ENCODE measurements at regions of chr1 and their contacts with region 1.

Region 1: DNA sequence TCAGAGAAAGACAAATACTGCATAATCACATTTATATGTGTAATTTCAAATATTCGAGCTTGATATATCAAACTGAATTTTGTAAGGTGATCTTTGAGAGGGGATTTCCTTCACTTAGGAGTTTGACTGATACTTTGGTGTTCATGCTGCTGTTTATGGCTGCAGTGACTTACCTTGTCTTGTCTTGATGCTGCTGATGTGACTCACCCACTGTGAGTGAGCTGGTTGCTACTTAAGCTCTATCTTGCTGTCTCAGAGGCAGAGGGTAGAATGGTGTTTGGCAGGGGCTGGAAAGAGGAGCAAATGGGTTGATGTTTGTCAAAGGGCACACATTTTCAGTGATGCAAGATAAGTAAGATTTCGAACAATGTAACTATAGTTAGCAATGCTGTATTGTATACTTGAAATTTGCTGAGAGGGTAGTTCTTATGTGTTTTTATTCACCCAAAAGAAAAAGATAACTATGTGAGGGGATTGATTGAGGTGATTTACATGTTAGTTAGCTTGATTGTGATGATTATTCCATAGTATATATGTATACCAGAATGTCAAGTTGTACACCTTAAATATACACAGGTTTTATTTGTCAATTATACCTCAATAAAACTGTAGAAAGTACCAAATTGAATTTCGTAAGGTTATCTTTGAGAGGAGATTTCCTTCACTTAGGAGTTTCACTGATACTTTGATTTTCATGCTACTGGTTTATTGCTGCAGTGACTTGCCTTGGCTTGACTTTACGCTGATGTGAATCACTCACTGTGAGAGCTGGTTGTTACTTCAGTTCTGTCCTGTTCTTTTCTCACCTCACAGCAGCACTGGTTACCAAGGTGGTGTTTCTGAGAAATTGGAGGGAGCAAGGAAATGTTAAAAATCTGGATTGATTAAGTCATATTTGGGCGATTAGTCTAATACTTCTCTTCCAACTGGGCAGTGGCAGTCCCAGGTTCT is 94.5 kb upstream of the SLC5A9 start:
- DNase-seq: peak; percentile 21
- H3K4me3 Mint-ChIP-seq: no peak overlapping the region
- H3K27ac Mint-ChIP-seq: peak overlapping the region; percentile 70
- H3K4me1 Mint-ChIP-seq: peaks cover 17% of the 10 kb centered on the region
- H3K27me3 Mint-ChIP-seq: no peaks in the 10 kb centered on the region
- CTCF ChIP-seq: no peak

Region 2: DNA sequence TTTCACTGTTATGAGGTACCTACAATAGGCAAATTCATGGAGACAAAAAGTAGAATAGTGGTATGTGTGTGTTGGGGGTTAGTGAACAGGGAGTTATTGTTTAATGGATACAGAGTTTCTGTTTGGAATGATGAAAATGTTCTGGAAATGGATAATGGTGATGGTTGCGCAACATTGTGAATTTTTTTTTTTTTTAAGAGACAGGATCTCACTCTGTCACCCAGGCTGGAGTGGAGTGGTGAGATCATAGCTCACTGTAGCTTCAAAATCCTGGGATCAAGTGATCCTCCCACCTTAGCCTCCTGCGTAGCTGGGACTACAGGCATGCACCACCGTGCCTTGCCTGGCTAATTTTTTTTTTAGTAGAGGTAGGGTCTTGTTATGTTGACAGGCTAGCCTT is 96.3 kb before region 1 on chr1:
- CTCF ChIA-PET with region 1: no interaction called
- POLR2A ChIA-PET with region 1: no interaction called
- intact Hi-C with region 1: no loop called
- DNase-seq: peak; percentile 23
- H3K4me3 Mint-ChIP-seq: no peak overlapping the region
- H3K27ac Mint-ChIP-seq: no peak overlapping the region
- H3K4me1 Mint-ChIP-seq: peaks cover 21% of the 10 kb centered on the region
- H3K27me3 Mint-ChIP-seq: no peaks in the 10 kb centered on the region
- CTCF ChIP-seq: no peak

Region 3: GRCh38 chr1:48114596-48115382 is 13.2 kb before region 1 on chr1:
- CTCF ChIA-PET with region 1: interaction called, 24 read pairs
- POLR2A ChIA-PET with region 1: interaction called, 13 read pairs
- intact Hi-C with region 1: no loop called
- DNase-seq: peak; percentile 82
- H3K4me3 Mint-ChIP-seq: no peak overlapping the region
- H3K27ac Mint-ChIP-seq: peak overlapping the region; percentile 93
- H3K4me1 Mint-ChIP-seq: peaks cover 45% of the 10 kb centered on the region
- H3K27me3 Mint-ChIP-seq: no peaks in the 10 kb centered on the region
- CTCF ChIP-seq: no peak

Region 4: GRCh38 chr1:48139275-48139674 is 11.3 kb after region 1 on chr1:
- CTCF ChIA-PET with region 1: no interaction called
- POLR2A ChIA-PET with region 1: interaction called, 15 read pairs
- intact Hi-C with region 1: no loop called
- DNase-seq: no peak
- H3K4me3 Mint-ChIP-seq: no peak overlapping the region
- H3K27ac Mint-ChIP-seq: no peak overlapping the region
- H3K4me1 Mint-ChIP-seq: peaks cover 6% of the 10 kb centered on the region
- H3K27me3 Mint-ChIP-seq: no peaks in the 10 kb centered on the region
- CTCF ChIP-seq: no peak

Region 5: DNA sequence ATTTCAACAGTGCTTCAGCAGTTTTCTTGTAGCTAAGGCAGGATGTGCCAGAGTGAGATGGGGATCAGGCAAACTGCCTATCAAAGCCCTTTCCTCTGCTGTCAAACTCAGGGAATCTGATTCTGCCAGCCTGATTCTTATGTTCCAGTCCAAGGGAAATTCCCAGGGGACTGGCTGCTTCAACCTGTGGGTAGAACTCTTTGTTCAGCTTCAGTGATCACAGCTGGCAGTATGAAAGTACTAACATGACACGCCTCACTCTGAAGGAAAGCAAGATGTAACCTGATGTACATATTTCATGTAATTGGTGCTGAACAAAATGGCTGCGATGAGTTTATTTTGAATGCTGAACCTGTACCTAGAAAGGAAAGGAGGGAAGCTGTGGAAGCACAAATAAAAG is 54.4 kb after region 1 on chr1:
- CTCF ChIA-PET with region 1: no interaction called
- POLR2A ChIA-PET with region 1: interaction called, 14 read pairs
- intact Hi-C with region 1: no loop called
- DNase-seq: peak; percentile 67
- H3K4me3 Mint-ChIP-seq: peak overlapping the region; percentile 66
- H3K27ac Mint-ChIP-seq: peak overlapping the region; percentile 88
- H3K4me1 Mint-ChIP-seq: peaks cover 48% of the 10 kb centered on the region
- H3K27me3 Mint-ChIP-seq: no peaks in the 10 kb centered on the region
- CTCF ChIP-seq: no peak

Region 6: GRCh38 chr1:48309564-48310082 is 181.6 kb after region 1 on chr1:
- CTCF ChIA-PET with region 1: no interaction called
- POLR2A ChIA-PET with region 1: no interaction called
- intact Hi-C with region 1: no loop called
- DNase-seq: no peak
- H3K4me3 Mint-ChIP-seq: no peak overlapping the region
- H3K27ac Mint-ChIP-seq: no peak overlapping the region
- H3K4me1 Mint-ChIP-seq: no peaks in the 10 kb centered on the region
- H3K27me3 Mint-ChIP-seq: no peaks in the 10 kb centered on the region
- CTCF ChIP-seq: no peak

Region 7: DNA sequence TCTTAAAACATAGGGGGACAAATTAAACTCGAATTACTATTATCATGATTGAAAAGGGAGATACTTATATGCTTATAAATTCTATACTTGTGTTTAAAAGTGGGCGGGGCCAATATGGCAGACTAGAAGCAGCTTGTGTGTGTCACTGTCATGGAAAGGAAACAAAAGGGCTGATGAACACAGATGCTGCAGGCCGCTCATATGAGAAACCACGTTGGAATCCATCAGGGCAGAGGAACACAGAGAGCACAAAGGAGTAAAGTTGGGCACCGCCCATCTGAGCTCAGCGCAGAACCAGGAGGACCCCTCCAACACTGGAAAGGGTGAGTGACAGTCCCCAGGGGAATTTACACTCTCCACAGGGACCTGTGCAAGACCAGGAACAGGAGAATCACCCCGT is 201.5 kb after region 1 on chr1:
- CTCF ChIA-PET with region 1: no interaction called
- POLR2A ChIA-PET with region 1: no interaction called
- intact Hi-C with region 1: no loop called
- DNase-seq: no peak
- H3K4me3 Mint-ChIP-seq: no peak overlapping the region
- H3K27ac Mint-ChIP-seq: no peak overlapping the region
- H3K4me1 Mint-ChIP-seq: no peaks in the 10 kb centered on the region
- H3K27me3 Mint-ChIP-seq: no peaks in the 10 kb centered on the region
- CTCF ChIP-seq: no peak